ENCODE measurements at regions of chr3 and their contacts with region 1.

Region 1: GRCh38 chr3:49093853-49094767 is at the start of gene QRICH1:
- DNase-seq: peak; percentile 87
- H3K4me3 ChIP-seq: peak within 1 kb of the TSS; percentile 89
- CTCF ChIP-seq: peak; percentile 70

Region 2: GRCh38 chr3:49021813-49022687 is 72.1 kb before region 1 on chr3 and contains the start of gene NDUFAF3:
- CTCF ChIA-PET with region 1: interaction called, 25 read pairs
- POLR2A ChIA-PET with region 1: interaction called, 31 read pairs
- DNase-seq: no peak
- H3K4me3 ChIP-seq: peak within 1 kb of the TSS; percentile 94
- CTCF ChIP-seq: peak; percentile 99

Region 3: GRCh38 chr3:49104483-49105291 is 10.6 kb after region 1 on chr3 and contains the start of gene QARS1:
- CTCF ChIA-PET with region 1: interaction called, 7 read pairs
- POLR2A ChIA-PET with region 1: interaction called, 23 read pairs
- DNase-seq: peak; percentile 50
- H3K4me3 ChIP-seq: peak within 1 kb of the TSS; percentile 95
- CTCF ChIP-seq: no peak

Region 4: DNA sequence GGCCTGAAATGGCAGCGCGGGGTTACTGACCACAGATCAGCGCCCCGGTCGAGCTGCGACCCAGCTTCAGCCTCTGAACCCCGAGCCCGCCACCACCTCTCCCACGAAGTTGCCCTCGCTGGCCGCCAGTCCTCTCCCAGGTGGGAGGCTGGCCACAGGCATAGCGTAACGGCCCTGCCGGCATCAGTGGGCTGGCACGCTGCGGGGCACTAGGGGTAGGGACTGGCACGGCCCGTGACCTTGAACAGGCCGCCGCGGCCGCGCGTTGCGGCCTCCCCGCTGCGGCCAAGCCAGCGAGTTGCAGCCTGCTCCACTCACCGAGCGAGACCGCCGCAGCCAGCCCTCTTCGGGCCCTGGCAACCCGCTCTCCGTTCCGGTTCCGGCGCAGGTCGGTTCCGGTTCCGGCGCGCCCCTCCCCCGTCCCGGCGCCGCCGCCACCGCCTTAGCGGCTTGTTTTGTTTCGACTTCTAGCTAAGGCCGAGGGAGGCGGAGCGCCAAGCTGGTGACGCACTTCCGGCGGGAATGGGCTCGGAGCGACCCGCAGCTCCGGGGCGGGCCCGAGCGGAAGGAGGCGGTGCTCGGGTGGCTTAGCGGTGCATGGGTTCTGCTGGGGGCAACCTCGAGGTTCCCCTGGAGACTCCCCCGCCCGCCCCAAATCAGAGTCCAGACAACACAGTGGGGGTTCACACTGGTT is 26.5 kb after region 1 on chr3 and contains the start of gene USP19:
- CTCF ChIA-PET with region 1: interaction called, 4 read pairs
- POLR2A ChIA-PET with region 1: interaction called, 13 read pairs
- DNase-seq: no peak
- H3K4me3 ChIP-seq: peak within 1 kb of the TSS; percentile 96
- CTCF ChIP-seq: no peak

Measured in AG04449 (cell line).